Colonic mucosa (tissue), 4 donors: ENCODE measurements at regions of chr3 and their contacts with region 1.

Region 1: GRCh38 chr3:184371570-184372018 is 6.4 kb downstream of the THPO start:
- DNase-seq: peak; percentile 76
- H3K4me3 ChIP-seq: no peak overlapping the region
- H3K27ac ChIP-seq: no peak overlapping the region
- H3K4me1 ChIP-seq: no peaks in the 10 kb centered on the region
- H3K27me3 ChIP-seq: no peaks in the 10 kb centered on the region
- CTCF ChIP-seq: peak; percentile 91

Region 2: DNA sequence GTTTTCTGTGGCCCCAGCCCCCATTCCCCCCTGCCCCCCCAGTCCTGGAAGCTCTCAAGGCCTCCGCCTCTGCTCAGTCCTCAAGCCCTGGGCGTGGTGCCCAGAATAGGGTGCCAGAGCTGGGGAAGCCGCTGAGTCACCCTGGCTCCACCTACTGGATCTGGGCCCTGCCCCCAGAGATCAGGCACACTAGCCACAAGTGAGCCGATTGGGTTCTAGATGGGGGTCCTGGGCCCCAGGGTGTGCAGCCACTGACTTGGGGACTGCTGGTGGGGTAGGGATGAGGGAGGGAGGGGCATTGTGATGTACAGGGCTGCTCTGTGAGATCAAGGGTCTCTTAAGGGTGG is 51.5 kb before region 1 on chr3:
- intact Hi-C with region 1: no loop called
- DNase-seq: peak; percentile 96
- H3K4me3 ChIP-seq: no peak overlapping the region
- H3K27ac ChIP-seq: peak overlapping the region; percentile 76
- H3K4me1 ChIP-seq: peaks cover 15% of the 10 kb centered on the region
- H3K27me3 ChIP-seq: no peaks in the 10 kb centered on the region
- CTCF ChIP-seq: no peak

Region 3: DNA sequence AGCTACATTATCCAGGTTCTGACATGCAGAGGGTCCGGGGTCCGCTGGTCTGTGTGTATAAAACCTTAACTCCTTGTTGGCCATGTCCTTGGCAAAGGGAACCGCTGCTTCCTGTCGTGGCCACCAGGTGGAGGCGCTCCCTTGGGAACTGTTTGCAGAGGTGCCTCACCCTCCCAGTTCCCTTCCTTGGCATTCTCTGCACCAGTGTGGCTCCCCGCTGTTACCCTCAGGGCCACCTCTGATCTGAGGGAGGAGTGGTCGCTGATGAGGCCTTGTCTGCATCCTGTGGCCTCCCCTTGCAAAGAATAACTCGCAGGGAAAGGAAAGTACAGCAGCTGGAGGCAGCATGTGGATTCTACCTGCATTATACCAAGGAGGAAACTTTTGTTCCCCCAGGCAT is 97.8 kb after region 1 on chr3:
- intact Hi-C with region 1: loop called (anchors 10 kb)
- DNase-seq: peak; percentile 59
- H3K4me3 ChIP-seq: no peak overlapping the region
- H3K27ac ChIP-seq: no peak overlapping the region
- H3K4me1 ChIP-seq: no peaks in the 10 kb centered on the region
- H3K27me3 ChIP-seq: no peaks in the 10 kb centered on the region
- CTCF ChIP-seq: peak; percentile 45

Region 4: DNA sequence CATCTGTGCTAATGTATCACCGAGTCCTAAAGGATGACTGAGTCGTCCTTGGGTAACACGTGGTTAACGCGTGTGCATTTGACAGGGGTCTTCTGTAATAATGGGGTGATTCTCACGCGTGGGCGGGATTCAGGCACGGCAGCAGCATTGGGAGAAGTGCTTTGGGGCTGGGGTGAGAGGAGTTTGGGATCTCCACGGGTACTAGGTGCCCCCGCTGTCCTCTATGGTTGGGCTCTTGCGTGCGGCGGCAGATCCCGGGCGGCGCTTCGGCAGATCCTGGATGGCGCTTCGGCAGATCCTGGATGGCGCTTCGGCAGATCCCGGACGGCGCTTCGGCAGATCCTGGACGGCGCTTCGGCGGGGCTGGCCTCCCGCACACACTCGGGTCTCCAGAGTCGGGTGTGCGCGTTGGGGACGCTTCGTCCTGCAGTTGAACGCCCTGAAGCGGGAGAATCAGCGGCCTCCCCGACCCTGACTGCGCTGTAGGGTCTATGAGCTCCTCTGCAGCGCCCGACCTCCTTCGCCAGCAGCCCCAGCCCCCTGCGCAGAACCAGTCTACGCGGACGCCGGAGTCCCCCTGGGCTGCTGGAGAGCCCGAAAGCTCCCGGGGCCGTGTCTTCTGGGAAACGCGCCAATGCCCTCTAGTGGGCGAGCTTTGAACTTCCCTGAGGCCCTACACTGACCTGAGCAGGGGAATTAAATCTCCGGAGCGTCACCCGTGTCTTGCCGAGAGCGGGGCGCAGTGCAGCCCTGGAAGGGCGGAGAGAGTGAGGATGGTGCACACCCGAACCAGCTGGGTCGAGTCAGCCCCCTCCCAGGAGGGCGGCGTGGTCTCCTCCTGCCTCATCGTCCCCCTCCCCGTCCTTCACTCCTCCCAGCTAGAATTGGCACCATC is 141.9 kb after region 1 on chr3:
- intact Hi-C with region 1: loop called (anchors 2 kb)
- DNase-seq: peak; percentile 89
- H3K4me3 ChIP-seq: peak overlapping the region; percentile 38
- H3K27ac ChIP-seq: no peak overlapping the region
- H3K4me1 ChIP-seq: no peaks in the 10 kb centered on the region
- H3K27me3 ChIP-seq: peaks cover 3% of the 10 kb centered on the region
- CTCF ChIP-seq: peak; percentile 72

Region 5: GRCh38 chr3:184543843-184544512 is 172.4 kb after region 1 on chr3:
- intact Hi-C with region 1: loop called (anchors 2 kb)
- DNase-seq: peak; percentile 88
- H3K4me3 ChIP-seq: no peak overlapping the region
- H3K27ac ChIP-seq: no peak overlapping the region
- H3K4me1 ChIP-seq: no peaks in the 10 kb centered on the region
- H3K27me3 ChIP-seq: no peaks in the 10 kb centered on the region
- CTCF ChIP-seq: peak; percentile 89